SK-N-SH (cell line): ENCODE measurements at regions of chr17 and their contacts with region 1.

Region 1: DNA sequence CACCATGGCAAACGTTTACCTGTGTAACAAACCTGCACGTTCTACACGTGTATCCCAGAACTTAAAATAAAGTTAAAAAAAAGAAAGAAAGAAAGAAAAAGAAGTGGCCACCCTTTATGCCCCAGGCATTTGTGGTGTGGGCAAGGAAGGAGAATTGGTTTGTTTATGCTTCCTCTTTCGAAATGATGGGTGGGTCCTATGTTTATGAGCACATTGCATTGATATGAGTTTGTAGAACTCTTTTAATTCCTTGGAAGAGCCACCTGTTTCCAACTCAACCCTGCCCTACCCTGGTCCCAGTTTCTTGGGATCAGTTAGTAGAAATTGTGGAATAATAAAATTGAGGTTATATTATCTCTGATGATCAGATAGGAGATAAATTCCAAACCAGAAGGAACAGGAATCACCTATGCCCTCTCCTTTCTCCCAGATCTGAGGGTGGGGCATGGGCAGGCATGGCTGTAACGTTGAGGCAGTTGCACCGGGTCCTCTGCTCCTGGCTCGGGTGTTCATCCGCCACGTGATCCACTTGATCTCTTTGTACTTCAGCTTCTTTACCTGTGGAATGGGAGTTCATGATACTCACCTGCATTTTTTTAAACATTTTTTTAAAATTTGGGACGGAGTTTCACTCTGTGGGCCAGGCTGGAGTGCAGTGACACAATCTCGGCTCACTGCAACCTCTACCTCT is 15.9 kb downstream of the CHAD start:
- DNase-seq: no peak
- H3K4me3 ChIP-seq: no peak overlapping the region
- H3K27ac ChIP-seq: no peak overlapping the region
- H3K4me1 ChIP-seq: no peaks in the 10 kb centered on the region
- H3K27me3 ChIP-seq: no peaks in the 10 kb centered on the region
- CTCF ChIP-seq: no peak
- EP300 ChIP-seq: no peak
- RAD21 ChIP-seq: no peak

Region 2: DNA sequence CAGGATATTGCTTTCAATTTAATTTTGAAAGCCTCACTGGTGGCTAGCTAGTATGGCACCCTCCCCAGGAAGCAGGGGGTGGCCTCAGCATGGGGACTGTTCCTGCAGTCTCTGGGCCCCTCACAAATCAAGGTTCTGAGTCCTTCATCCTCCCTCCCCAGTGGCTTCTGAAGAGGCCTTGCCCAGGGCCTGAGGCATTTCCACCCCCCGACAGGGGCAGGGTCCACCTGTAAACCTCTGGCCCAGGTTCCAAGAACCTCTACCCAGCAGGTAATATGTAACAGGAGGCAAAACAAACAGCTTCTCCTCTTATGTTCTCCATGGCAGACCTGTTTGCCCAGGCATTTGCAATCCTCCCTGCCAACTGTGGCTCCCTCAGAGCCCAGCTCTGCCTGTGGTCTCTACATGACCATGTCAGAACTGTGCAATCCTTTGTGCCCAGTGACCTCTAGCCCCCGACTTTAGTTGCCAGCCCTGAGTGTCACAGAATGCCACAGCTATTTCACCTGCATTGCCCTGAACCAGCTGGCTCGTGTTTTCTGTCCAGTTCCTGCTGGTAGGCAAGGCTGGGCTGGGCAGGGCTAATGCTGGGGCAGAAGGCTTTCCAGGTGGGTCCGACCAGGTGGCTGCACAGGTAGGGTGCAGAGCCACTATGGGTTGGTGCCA is 12.4 kb before region 1 on chr17:
- CTCF ChIA-PET with region 1: interaction called, 11 read pairs
- POLR2A ChIA-PET with region 1: no interaction called
- DNase-seq: no peak
- H3K4me3 ChIP-seq: no peak overlapping the region
- H3K27ac ChIP-seq: no peak overlapping the region
- H3K4me1 ChIP-seq: peaks cover 0 to 10% of the 10 kb centered on the region in 2 experiments; a peak in 1 of 4 replicates
- H3K27me3 ChIP-seq: no peaks in the 10 kb centered on the region
- CTCF ChIP-seq: no peak
- EP300 ChIP-seq: no peak
- RAD21 ChIP-seq: no peak